ENCODE measurements at regions of chr20 and their contacts with region 1.

Region 1: GRCh38 chr20:50575847-50576720 is 65.9 kb downstream of the PTPN1 start:
- DNase-seq: peak; percentile 88
- H3K4me3 ChIP-seq: no peak overlapping the region
- H3K27ac ChIP-seq: peak overlapping the region; percentile 47 to 83 (median 78)
- H3K4me1 ChIP-seq: peaks cover 0 to 64% (median 40%) of the 10 kb centered on the region in 4 donors
- H3K27me3 ChIP-seq: no peaks in the 10 kb centered on the region
- CTCF ChIP-seq: peak; percentile 54 to 83 (median 74)
- EP300 ChIP-seq: no peak
- POLR2A ChIP-seq: no peak

Region 2: DNA sequence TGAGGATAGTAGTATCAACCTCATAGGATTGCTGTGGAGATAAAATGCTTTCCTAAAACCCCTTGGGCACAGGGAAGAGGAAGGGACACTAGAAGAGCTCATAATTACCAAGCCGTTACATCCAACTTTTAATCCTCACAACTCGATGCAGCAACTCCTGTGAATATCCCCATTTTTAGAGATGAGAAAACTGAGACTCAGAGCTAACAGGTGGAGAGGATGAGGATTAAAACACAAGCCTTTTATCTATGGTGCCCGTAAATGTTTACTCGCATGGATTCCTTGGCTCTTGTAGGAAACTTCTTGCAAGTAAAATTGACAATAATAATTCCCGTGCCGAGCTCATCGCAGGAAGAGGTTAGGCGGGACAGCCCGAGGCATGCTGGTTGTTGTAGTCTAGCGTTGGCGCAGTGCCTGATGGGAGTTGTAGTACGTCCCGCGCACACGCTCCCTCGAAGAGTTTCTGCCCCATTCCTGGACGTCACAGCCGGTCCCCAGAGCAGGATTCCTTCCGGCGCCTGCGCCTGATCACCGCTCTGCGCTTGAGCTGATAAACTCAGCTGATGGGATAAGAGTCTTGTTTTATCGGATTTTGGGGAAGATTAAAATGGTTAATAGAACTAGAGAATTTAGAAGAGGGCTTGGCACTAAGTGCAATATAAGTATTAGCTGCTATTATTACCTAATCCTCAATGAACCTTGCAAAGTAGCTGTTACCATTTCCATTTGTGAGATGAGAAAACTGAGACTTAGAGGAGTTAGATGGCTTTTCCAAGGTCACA is 460.3 kb before region 1 on chr20:
- intact Hi-C with region 1: loop called (anchors 10 kb)
- DNase-seq: peak; percentile 99
- H3K4me3 ChIP-seq: peak overlapping the region; percentile 29 to 55 (median 50)
- H3K27ac ChIP-seq: peak overlapping the region; percentile 81 to 99 (median 91)
- H3K4me1 ChIP-seq: peaks cover 0 to 43% (median 36%) of the 10 kb centered on the region in 4 donors
- H3K27me3 ChIP-seq: no peaks in the 10 kb centered on the region
- CTCF ChIP-seq: no peak
- EP300 ChIP-seq: peak in 1 of 4 donors; percentile 53
- POLR2A ChIP-seq: no peak

Region 3: GRCh38 chr20:50484276-50484976 is 91.7 kb before region 1 on chr20:
- intact Hi-C with region 1: loop called (anchors 2 kb)
- DNase-seq: no peak
- H3K4me3 ChIP-seq: peak overlapping the region in 3 of 4 donors; percentile 52 to 57 (median 52)
- H3K27ac ChIP-seq: peak overlapping the region; percentile 83 to 88 (median 84)
- H3K4me1 ChIP-seq: peaks cover 0 to 14% (median 8%) of the 10 kb centered on the region in 4 donors
- H3K27me3 ChIP-seq: no peaks in the 10 kb centered on the region
- CTCF ChIP-seq: no peak
- EP300 ChIP-seq: no peak
- POLR2A ChIP-seq: no peak

Region 4: GRCh38 chr20:50509935-50510705 is 66.0 kb before region 1 on chr20 and contains the start of gene PTPN1:
- intact Hi-C with region 1: loop called (anchors 2 kb)
- DNase-seq: peak; percentile 99
- H3K4me3 ChIP-seq: peak within 1 kb of the TSS; percentile 91 to 99 (median 96)
- H3K27ac ChIP-seq: peak within 1 kb of the TSS; percentile 88 to 96 (median 93)
- H3K4me1 ChIP-seq: peaks cover 0 to 51% (median 45%) of the 10 kb centered on the region in 4 donors
- H3K27me3 ChIP-seq: no peaks in the 10 kb centered on the region
- CTCF ChIP-seq: peak in 1 of 4 experiments; percentile 24
- EP300 ChIP-seq: no peak
- POLR2A ChIP-seq: peak; percentile 98
- total RNA-seq, gene PTPN1: 21.6 to 31.2 (median 23.6) TPM

Measured in sigmoid colon (tissue), 7 donors.